ENCODE measurements at regions of chr11 and their contacts with region 1.

Region 1: GRCh38 chr11:27485930-27486773 is 13.6 kb upstream of the LGR4 start:
- DNase-seq: peak in 6 of 14 experiments; percentile 9 to 70 (median 60)
- ATAC-seq: no peak
- H3K4me3 ChIP-seq: no peak overlapping the region
- H3K4me3 Mint-ChIP-seq: no peak overlapping the region
- H3K27ac ChIP-seq: no peak overlapping the region
- H3K27ac Mint-ChIP-seq: no peak overlapping the region
- H3K4me1 ChIP-seq: no peaks in the 10 kb centered on the region
- H3K4me1 Mint-ChIP-seq: no peaks in the 10 kb centered on the region
- H3K27me3 ChIP-seq: no peaks in the 10 kb centered on the region
- H3K27me3 Mint-ChIP-seq: no peaks in the 10 kb centered on the region
- CTCF ChIP-seq: peak; percentile 87

Region 2: DNA sequence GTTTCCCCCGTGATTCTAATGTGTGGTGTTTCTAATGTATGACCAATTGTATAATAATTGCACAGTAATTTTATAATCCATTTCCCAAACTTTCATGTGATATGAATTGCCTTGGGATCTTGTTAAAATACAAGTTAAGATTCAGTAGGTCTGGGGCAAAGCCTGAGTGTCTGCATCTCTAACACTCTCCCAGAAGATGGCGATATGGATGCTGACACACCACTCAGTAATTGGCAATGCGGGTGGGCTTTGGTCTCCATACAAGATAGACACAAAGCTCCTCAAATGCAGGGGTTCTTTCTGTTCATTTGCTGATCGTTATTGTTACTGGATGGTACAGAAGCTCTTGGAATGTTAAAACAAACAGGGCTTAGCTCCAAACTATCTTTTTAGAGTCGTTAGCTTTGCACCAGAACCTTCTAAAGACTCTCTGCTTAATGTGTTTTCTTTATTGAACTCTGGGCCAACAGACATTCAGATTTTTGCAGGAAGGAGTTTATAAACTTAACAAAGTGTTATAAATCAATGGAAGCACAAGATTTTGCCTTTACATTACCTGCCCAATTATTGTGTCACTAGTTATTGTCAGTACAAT is 1199.6 kb before region 1 on chr11:
- CTCF ChIA-PET with region 1: no interaction called
- POLR2A ChIA-PET with region 1: no interaction called
- intact Hi-C with region 1: loop called (anchors 5 kb)
- DNase-seq: peak in 1 of 14 experiments; percentile 3
- ATAC-seq: no peak
- H3K4me3 ChIP-seq: no peak overlapping the region
- H3K4me3 Mint-ChIP-seq: no peak overlapping the region
- H3K27ac ChIP-seq: no peak overlapping the region
- H3K27ac Mint-ChIP-seq: no peak overlapping the region
- H3K4me1 ChIP-seq: no peaks in the 10 kb centered on the region
- H3K4me1 Mint-ChIP-seq: no peaks in the 10 kb centered on the region
- H3K27me3 ChIP-seq: no peaks in the 10 kb centered on the region
- H3K27me3 Mint-ChIP-seq: peaks cover 4% of the 10 kb centered on the region
- CTCF ChIP-seq: no peak

Region 3: DNA sequence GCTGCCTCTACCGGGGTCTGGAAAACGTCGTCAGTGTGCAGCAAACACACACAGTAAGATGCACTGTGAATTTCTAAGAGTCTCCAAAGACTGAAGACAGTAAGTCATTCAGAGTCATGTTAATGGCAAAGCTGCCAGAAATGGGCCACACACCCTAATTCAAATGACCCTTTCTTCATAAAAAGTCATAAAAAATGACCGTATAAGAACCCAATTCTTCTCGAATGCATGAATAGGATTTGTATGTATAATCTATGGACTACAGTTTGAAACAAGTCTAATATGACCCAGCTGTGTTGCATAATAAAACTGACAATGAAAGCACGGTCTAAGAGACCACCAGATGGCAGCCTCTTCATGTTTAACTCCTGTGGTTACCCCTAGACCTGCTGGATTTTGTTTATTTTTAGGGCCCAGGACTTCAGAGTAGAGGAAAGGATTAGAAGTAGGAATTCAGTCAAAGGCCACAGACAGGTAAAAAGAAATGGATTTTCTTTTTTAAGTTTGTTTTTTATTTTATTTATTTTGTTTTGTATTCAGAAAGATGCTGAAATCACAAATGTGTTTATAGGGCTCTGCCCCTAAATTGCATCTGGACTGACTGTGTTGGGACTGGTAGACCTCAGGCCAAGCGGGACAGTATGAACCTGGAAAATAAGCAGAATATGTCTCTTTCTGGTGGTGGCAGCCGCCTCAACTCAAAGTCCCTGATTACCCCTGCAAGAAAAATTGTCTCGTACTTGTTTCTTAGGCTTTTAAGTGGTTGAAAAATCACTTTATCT is 732.2 kb before region 1 on chr11:
- CTCF ChIA-PET with region 1: no interaction called
- POLR2A ChIA-PET with region 1: no interaction called
- intact Hi-C with region 1: loop called in 1 of 2 experiments (anchors 10 kb)
- DNase-seq: peak in 1 of 14 experiments; percentile 0
- ATAC-seq: no peak
- H3K4me3 ChIP-seq: no peak overlapping the region
- H3K4me3 Mint-ChIP-seq: no peak overlapping the region
- H3K27ac ChIP-seq: no peak overlapping the region
- H3K27ac Mint-ChIP-seq: no peak overlapping the region
- H3K4me1 ChIP-seq: no peaks in the 10 kb centered on the region
- H3K4me1 Mint-ChIP-seq: no peaks in the 10 kb centered on the region
- H3K27me3 ChIP-seq: no peaks in the 10 kb centered on the region
- H3K27me3 Mint-ChIP-seq: no peaks in the 10 kb centered on the region
- CTCF ChIP-seq: no peak

Region 4: DNA sequence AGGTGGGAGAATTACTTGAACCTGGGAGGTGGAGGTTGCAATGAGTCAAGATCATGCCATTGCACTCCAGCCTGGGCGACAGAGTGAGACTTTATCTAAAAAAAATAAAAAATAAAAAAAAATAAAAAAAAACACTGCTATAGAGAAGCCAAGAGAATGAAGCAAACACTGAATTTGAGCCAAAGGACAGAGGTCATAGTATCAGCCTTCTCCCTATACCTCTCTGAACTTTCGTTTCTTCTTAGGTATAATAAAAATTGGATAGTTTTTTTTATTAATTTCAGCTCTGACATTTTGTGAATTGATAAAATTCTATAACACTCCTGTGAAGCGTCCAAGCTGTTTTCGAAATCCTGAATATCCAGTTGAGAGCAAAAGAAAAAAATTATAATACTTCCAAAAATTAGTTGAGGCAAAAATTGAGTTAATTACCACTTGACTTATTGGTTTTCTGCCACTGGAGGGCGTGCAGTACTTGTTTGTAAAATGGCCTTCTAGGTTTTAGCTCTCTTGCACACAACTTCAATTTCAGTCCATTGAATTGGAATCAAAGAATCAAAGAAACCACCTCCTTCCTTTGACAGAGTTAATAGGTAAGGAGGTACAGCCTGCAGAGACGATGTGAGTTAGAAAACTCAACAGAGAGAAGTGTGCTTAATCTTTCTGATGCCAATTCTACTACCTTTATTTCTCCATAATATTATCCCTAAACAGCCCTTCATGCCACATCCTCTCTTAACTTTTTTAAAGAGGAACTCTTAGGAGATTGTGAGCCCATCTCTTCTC is 302.3 kb before region 1 on chr11:
- CTCF ChIA-PET with region 1: interaction called, 19 read pairs
- POLR2A ChIA-PET with region 1: interaction called, 5 read pairs
- intact Hi-C with region 1: loop called (anchors 1 to 2 kb)
- DNase-seq: peak in 9 of 14 experiments; percentile 5 to 59 (median 18)
- ATAC-seq: peak; percentile 32
- H3K4me3 ChIP-seq: no peak overlapping the region
- H3K4me3 Mint-ChIP-seq: no peak overlapping the region
- H3K27ac ChIP-seq: no peak overlapping the region
- H3K27ac Mint-ChIP-seq: no peak overlapping the region
- H3K4me1 ChIP-seq: no peaks in the 10 kb centered on the region
- H3K4me1 Mint-ChIP-seq: no peaks in the 10 kb centered on the region
- H3K27me3 ChIP-seq: peaks cover 0 to 2% of the 10 kb centered on the region in 2 experiments
- H3K27me3 Mint-ChIP-seq: peaks cover 16% of the 10 kb centered on the region
- CTCF ChIP-seq: peak; percentile 48

Region 5: DNA sequence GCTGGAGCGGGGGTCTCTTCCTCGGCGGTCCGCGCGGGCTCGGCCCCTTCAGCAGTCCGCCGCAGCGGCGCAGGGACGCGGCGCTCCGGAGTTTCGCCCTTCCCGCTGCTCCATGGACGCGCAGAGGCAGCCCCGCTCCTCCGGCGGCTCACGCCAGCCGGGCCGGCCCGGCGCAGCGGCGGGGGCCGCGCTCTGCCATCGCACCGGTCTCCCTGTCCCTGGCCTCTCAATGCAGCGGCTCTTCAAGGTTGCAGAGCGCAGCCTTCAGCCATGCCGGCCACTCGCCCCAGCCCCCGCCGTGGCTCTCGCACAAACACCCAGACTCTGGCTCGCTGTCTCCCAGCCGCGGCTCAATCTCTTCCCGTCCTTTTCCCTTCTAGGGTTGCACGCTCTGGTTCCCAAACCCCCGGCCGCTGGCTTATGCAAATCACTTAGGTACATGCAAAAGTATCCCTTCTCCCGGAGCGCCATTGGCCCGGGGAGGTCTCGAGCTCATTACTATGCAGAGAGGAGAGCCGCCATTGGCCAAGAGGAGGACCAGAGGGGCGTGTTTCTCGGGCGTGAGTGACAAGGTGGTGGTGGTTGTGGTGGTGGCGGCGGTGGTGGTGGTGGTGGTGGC is 13.6 kb before region 1 on chr11 and contains the start of gene LGR4:
- CTCF ChIA-PET with region 1: interaction called, 24 read pairs
- POLR2A ChIA-PET with region 1: interaction called, 5 read pairs
- intact Hi-C with region 1: no loop called
- DNase-seq: peak; percentile 53 to 85 (median 66)
- ATAC-seq: peak; percentile 92
- H3K4me3 ChIP-seq: peak within 1 kb of the TSS; percentile 71
- H3K4me3 Mint-ChIP-seq: peak within 1 kb of the TSS; percentile 93
- H3K27ac ChIP-seq: no peak within 1 kb of the TSS
- H3K27ac Mint-ChIP-seq: peak within 1 kb of the TSS; percentile 7
- H3K4me1 ChIP-seq: peaks cover 17% of the 10 kb centered on the region
- H3K4me1 Mint-ChIP-seq: peaks cover 24% of the 10 kb centered on the region
- H3K27me3 ChIP-seq: peaks cover 8 to 18% of the 10 kb centered on the region in 2 experiments
- H3K27me3 Mint-ChIP-seq: peaks cover 24% of the 10 kb centered on the region
- CTCF ChIP-seq: no peak
- total RNA-seq, gene LGR4: 0.69 to 0.87 TPM

Region 6: DNA sequence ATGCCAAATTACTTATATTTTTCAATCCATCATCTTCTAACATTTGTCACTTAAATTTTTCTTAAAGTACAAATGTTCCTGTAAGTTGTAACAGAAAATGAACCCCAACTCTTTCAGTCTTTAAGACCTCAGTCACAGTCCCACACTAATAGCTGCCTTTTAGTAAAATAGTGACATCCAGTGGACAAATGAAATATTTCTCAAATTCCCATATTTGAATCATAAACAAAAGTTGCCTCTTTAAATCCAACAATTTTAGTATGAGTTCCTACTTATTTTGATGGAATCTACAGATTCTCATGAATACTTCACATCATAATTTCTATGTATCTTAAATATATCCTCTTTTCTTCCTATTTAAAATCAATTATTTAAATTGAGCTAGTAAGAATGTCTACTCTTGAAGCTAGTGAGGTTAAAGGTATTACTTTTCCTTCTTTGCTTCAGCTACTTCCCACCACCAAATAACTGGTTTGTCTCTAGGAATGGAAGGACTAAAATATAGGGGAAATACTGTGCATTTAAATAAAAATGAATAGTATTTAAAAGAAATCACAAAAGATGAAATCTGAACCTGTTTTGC is 11.2 kb after region 1 on chr11:
- CTCF ChIA-PET with region 1: interaction called, 27 read pairs
- POLR2A ChIA-PET with region 1: interaction called, 5 read pairs
- intact Hi-C with region 1: no loop called
- DNase-seq: peak in 3 of 14 experiments; percentile 29 to 43 (median 34)
- ATAC-seq: peak; percentile 43
- H3K4me3 ChIP-seq: no peak overlapping the region
- H3K4me3 Mint-ChIP-seq: no peak overlapping the region
- H3K27ac ChIP-seq: no peak overlapping the region
- H3K27ac Mint-ChIP-seq: no peak overlapping the region
- H3K4me1 ChIP-seq: no peaks in the 10 kb centered on the region
- H3K4me1 Mint-ChIP-seq: peaks cover 31% of the 10 kb centered on the region
- H3K27me3 ChIP-seq: no peaks in the 10 kb centered on the region
- H3K27me3 Mint-ChIP-seq: no peaks in the 10 kb centered on the region
- CTCF ChIP-seq: peak; percentile 63

Region 7: GRCh38 chr11:27563201-27563600 is 77.0 kb after region 1 on chr11:
- CTCF ChIA-PET with region 1: no interaction called
- POLR2A ChIA-PET with region 1: no interaction called
- intact Hi-C with region 1: no loop called
- DNase-seq: no peak
- ATAC-seq: no peak
- H3K4me3 ChIP-seq: no peak overlapping the region
- H3K4me3 Mint-ChIP-seq: no peak overlapping the region
- H3K27ac ChIP-seq: no peak overlapping the region
- H3K27ac Mint-ChIP-seq: no peak overlapping the region
- H3K4me1 ChIP-seq: no peaks in the 10 kb centered on the region
- H3K4me1 Mint-ChIP-seq: no peaks in the 10 kb centered on the region
- H3K27me3 ChIP-seq: no peaks in the 10 kb centered on the region
- H3K27me3 Mint-ChIP-seq: no peaks in the 10 kb centered on the region
- CTCF ChIP-seq: no peak

Measured in CD4-positive, alpha-beta T cell (primary cell).